Activated CD4-positive, alpha-beta memory T cell treated with anti-CD3 and anti-CD28 coated beads for 36 hours (primary cell): ENCODE measurements at regions of chr18 and their contacts with region 1.

Region 1: GRCh38 chr18:63186520-63187222 is 132.9 kb downstream of the BCL2 start:
- DNase-seq: no peak
- H3K4me3 Mint-ChIP-seq: no peak overlapping the region
- H3K27ac Mint-ChIP-seq: peak overlapping the region; percentile 61
- H3K4me1 Mint-ChIP-seq: peaks cover 85% of the 10 kb centered on the region
- H3K27me3 Mint-ChIP-seq: no peaks in the 10 kb centered on the region

Region 2: GRCh38 chr18:63173983-63174382 is 12.7 kb before region 1 on chr18:
- CTCF ChIA-PET with region 1: no interaction called
- POLR2A ChIA-PET with region 1: no interaction called
- intact Hi-C with region 1: loop called (anchors 2 kb)
- DNase-seq: no peak
- H3K4me3 Mint-ChIP-seq: no peak overlapping the region
- H3K27ac Mint-ChIP-seq: no peak overlapping the region
- H3K4me1 Mint-ChIP-seq: peaks cover 58% of the 10 kb centered on the region
- H3K27me3 Mint-ChIP-seq: no peaks in the 10 kb centered on the region